Transverse colon (tissue), 4 donors: ENCODE measurements at regions of chr13 and their contacts with region 1.

Region 1: DNA sequence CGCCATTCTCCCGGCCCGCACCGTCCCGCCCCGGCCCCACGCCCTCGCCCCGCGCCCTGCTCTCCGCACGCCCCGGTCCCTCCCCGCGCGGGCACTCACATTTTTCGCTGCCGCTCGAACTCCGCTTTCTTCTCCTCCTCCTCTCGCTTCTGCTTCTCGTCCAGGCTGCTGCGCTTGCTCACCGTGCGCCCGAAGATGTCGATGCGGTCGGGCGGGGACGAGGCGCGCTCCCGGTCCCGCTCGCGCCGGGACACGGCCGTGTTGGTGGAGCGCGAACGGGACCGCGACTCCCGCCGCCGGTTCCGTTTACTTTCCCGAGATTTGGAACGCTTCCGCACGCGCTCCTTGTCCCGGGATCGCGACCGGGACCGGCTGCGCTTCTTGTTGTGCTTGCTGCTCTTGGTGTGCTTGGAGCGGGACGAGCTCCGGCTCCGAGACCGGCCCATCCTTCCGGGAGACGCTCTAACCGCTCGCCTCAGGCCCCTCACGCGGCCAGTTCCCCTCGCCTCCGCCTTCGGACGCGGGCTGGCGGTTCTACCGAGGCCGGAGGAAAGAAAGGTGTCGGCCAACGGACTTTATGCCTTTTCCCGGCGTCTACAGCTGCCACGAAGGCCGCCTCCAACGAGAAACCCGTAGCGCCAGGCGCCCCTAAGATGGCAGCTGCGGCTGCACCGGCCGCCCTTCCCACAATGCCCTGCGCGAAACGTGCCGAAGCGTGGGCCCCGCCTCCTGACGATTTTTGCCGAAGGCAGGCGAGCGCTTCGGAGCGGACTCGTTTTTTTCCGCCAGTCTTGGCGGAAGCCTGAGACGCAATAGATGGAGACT is at the start of gene ARGLU1:
- DNase-seq: peak; percentile 96
- H3K4me3 ChIP-seq: peak within 1 kb of the TSS; percentile 88 to 93 (median 89)
- H3K27ac ChIP-seq: peak within 1 kb of the TSS; percentile 96 to 99 (median 98)
- H3K4me1 ChIP-seq: peaks cover 20 to 46% (median 40%) of the 10 kb centered on the region in 4 donors
- H3K27me3 ChIP-seq: no peaks in the 10 kb centered on the region
- CTCF ChIP-seq: no peak
- EP300 ChIP-seq: no peak
- POLR2A ChIP-seq: peak; percentile 97
- total RNA-seq, gene ARGLU1: 106 to 155 (median 155) TPM

Region 2: DNA sequence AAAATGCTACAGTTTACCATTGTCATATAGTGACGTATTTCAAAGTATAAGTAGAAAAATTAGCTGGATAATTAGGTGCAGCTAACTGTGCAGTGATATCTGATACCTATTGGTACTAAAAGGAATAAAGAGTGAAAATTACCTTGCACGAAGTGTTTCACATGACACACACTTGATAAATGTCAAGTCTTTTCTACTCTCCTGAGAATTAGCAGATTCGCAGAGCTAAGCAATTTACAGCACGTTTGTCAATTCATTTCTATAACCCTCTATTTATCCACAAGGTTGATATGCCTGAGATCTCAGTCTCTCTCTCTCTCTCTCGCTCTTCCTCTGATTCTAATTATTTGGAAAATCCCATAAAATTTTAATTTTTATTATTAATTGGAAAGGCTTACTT is 1141.2 kb before region 1 on chr13:
- in situ Hi-C with region 1: no loop called
- intact Hi-C with region 1: no loop called
- DNase-seq: no peak
- H3K4me3 ChIP-seq: no peak overlapping the region
- H3K27ac ChIP-seq: no peak overlapping the region
- H3K4me1 ChIP-seq: no peaks in the 10 kb centered on the region
- H3K27me3 ChIP-seq: no peaks in the 10 kb centered on the region
- CTCF ChIP-seq: no peak
- EP300 ChIP-seq: no peak
- POLR2A ChIP-seq: no peak

Region 3: DNA sequence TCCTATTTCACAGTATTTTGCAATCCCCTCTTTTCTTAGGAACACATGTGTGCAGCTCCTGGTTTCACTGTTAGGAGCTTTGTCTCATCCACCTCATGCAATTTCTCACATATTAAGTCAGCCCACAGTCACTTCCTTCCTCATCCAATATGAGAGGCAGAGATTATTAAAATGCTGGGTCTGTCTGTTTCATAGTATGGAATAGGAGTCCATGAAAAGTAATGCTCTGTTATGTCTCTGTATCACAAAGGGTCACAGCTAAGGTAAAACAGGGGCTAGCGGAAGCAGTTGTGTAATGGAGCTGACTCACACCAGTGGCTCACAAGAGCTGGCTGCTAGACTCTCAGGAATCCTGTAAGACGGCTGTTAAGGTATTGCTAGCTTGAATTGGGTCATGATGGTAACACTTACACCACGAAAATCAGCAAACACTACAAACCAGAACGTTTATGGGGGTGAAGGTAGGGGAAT is 248.7 kb before region 1 on chr13:
- in situ Hi-C with region 1: no loop called
- intact Hi-C with region 1: no loop called
- DNase-seq: no peak
- H3K4me3 ChIP-seq: no peak overlapping the region
- H3K27ac ChIP-seq: no peak overlapping the region
- H3K4me1 ChIP-seq: no peaks in the 10 kb centered on the region
- H3K27me3 ChIP-seq: no peaks in the 10 kb centered on the region
- CTCF ChIP-seq: no peak
- EP300 ChIP-seq: no peak
- POLR2A ChIP-seq: no peak

Region 4: GRCh38 chr13:106917673-106918556 is 350.2 kb after region 1 on chr13:
- in situ Hi-C with region 1: loop called in 1 of 4 experiments (anchors 25 kb)
- intact Hi-C with region 1: no loop called
- DNase-seq: peak; percentile 78
- H3K4me3 ChIP-seq: peak overlapping the region; percentile 35 to 90 (median 52)
- H3K27ac ChIP-seq: peak overlapping the region; percentile 68 to 81 (median 76)
- H3K4me1 ChIP-seq: peaks cover 0 to 14% (median 7%) of the 10 kb centered on the region in 4 donors
- H3K27me3 ChIP-seq: no peaks in the 10 kb centered on the region
- CTCF ChIP-seq: peak; percentile 82 to 95 (median 89)
- EP300 ChIP-seq: no peak
- POLR2A ChIP-seq: no peak

Region 5: DNA sequence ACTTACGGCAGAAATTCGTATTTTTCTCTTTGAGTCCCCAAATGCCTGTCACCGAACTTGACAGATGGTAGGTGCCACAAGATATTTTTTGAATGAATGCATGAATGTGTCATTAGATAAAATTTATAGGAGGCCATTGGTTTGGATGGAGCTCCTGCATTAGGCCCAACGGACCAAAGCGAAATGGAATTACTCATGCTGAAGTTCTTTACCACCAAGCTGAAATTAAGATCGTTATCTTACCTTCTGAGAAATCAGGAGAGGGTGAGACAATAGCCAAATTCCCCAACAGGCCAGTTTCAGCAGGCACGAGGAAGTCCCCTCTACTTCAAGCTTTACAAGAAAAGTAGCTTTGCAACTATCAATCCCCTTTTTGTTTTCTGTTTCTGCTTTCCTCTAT is 452.7 kb after region 1 on chr13:
- in situ Hi-C with region 1: no loop called
- intact Hi-C with region 1: no loop called
- DNase-seq: no peak
- H3K4me3 ChIP-seq: no peak overlapping the region
- H3K27ac ChIP-seq: no peak overlapping the region
- H3K4me1 ChIP-seq: no peaks in the 10 kb centered on the region
- H3K27me3 ChIP-seq: no peaks in the 10 kb centered on the region
- CTCF ChIP-seq: no peak
- EP300 ChIP-seq: no peak
- POLR2A ChIP-seq: no peak

Region 6: GRCh38 chr13:107734891-107735625 is 1167.4 kb after region 1 on chr13:
- in situ Hi-C with region 1: no loop called
- intact Hi-C with region 1: no loop called
- DNase-seq: no peak
- H3K4me3 ChIP-seq: no peak overlapping the region
- H3K27ac ChIP-seq: no peak overlapping the region
- H3K4me1 ChIP-seq: no peaks in the 10 kb centered on the region
- H3K27me3 ChIP-seq: no peaks in the 10 kb centered on the region
- CTCF ChIP-seq: no peak
- EP300 ChIP-seq: no peak
- POLR2A ChIP-seq: no peak